Colonic mucosa (tissue), 4 donors: ENCODE measurements at regions of chr17 and their contacts with region 1.

Region 1: GRCh38 chr17:47941236-47941994 is at the start of gene PNPO:
- DNase-seq: peak; percentile 97
- H3K4me3 ChIP-seq: peak within 1 kb of the TSS; percentile 65
- H3K27ac ChIP-seq: peak within 1 kb of the TSS; percentile 80
- H3K4me1 ChIP-seq: peaks cover 9% of the 10 kb centered on the region
- H3K27me3 ChIP-seq: no peaks in the 10 kb centered on the region
- CTCF ChIP-seq: no peak
- total RNA-seq, gene PNPO: 18.1 to 70.5 TPM

Region 2: GRCh38 chr17:47895856-47896671 is 45.4 kb before region 1 on chr17 and contains the start of gene SP2:
- intact Hi-C with region 1: loop called (anchors 5 kb)
- DNase-seq: peak; percentile 100
- H3K4me3 ChIP-seq: peak within 1 kb of the TSS; percentile 82
- H3K27ac ChIP-seq: peak within 1 kb of the TSS; percentile 86
- H3K4me1 ChIP-seq: peaks cover 18% of the 10 kb centered on the region
- H3K27me3 ChIP-seq: no peaks in the 10 kb centered on the region
- CTCF ChIP-seq: no peak
- total RNA-seq, gene SP2: 18.1 to 21.6 TPM

Region 3: DNA sequence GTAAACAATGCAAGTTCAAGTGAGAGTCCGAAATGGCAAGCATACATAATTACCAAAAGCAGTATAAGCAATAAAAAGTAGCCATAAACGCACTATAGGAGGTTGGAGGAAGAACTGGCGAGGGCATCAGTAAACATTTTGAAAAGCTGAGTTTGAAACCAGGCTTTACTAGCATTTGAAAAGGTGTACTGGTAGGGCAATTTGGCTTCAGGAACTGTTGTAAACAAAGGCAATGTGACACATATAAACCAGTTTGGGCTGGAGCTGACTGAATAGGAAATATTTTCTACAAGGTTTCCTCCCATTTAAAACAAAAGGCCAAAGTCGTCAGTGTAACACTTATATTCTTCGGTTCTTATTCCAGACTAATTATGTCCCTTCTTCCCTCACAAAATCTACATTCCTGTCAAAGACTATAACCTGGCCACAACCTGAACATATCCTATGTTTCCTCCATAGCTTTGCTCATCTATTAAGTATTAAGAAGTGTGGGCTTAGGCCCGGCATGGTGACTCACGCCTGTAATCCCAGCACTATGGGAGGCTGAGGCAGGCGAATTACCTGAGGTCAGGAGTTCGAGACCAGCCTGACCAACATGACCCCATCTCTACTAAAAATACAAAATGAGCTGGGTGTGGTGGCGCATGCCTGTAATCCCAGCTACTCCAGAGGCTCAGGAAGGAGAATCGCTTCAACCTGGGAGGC is 152.1 kb after region 1 on chr17:
- intact Hi-C with region 1: no loop called
- DNase-seq: peak; percentile 58
- H3K4me3 ChIP-seq: no peak overlapping the region
- H3K27ac ChIP-seq: peak overlapping the region; percentile 79
- H3K4me1 ChIP-seq: no peaks in the 10 kb centered on the region
- H3K27me3 ChIP-seq: no peaks in the 10 kb centered on the region
- CTCF ChIP-seq: no peak

Region 4: DNA sequence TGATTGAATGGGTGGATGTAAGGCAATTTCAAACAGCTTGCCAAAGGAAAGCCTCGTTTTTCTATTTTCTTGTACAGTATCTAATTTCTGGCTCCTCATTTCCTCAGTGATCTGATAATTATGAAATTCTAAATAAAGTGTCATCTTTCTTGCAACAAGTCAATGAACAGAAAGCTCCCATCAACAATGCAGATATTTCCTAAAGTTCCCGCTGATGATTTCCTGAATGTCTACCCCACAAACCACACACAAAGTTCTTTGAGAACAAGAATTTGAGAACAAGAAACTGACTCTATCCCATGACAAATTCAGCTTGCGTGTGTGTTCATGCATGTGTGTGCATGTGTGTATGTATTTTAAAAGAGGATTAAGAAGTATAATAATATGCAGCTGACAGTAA is 453.4 kb after region 1 on chr17:
- intact Hi-C with region 1: no loop called
- DNase-seq: no peak
- H3K4me3 ChIP-seq: no peak overlapping the region
- H3K27ac ChIP-seq: no peak overlapping the region
- H3K4me1 ChIP-seq: no peaks in the 10 kb centered on the region
- H3K27me3 ChIP-seq: no peaks in the 10 kb centered on the region
- CTCF ChIP-seq: no peak